ENCODE measurements at regions of chr1 and their contacts with region 1.

Region 1: DNA sequence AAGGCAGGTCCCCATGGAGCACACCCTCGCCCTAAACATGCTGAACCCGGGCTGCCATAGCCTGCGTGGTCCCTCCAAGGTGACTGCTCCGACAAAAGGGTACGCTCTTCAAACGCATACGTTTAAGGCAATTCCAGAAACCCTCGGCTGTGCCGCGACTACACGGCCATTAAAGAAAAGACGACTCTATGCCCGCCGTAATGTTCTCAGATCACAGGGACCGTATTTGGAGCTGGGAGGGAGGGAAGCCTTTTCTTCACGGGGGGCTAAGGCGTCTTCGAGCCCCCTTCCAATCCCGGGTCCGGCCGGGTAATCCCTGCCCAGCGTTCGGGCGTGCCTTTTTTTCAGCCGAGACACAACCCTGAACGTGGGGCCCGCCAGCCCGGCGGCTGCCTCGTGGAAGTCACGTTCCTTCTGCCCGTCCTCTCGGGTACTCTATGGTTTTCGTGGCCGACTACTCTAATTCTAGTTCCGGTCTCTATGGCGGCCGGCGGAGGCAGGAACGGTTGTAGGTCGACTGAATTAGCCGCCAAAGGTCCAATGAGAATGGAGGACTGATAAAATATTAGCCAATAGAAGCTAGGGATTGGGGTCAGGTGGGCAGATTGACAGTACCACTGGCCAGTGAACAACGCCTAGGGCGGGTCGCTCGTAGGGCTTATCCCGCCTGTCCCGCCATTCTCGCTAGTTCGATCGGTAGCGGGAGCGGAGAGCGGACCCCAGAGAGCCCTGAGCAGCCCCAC is at the start of gene YBX1:
- DNase-seq: peak; percentile 98
- total RNA-seq, gene YBX1: 717 TPM

Region 2: GRCh38 chr1:42456010-42456758 is 225.7 kb before region 1 on chr1 and contains the starts of genes PPCS and ZMYND12:
- intact Hi-C with region 1: loop called (anchors 1 kb)
- DNase-seq: peak; percentile 91
- total RNA-seq, gene PPCS: 44.3 TPM
- total RNA-seq, gene ZMYND12: 1.6 TPM

Region 3: GRCh38 chr1:42657971-42658879 is 23.7 kb before region 1 on chr1 and contains the start of gene PPIH:
- intact Hi-C with region 1: loop called (anchors 1 kb)
- DNase-seq: peak; percentile 98
- total RNA-seq, gene PPIH: 18.3 TPM

Region 4: GRCh38 chr1:42766741-42767509 is 85.0 kb after region 1 on chr1 and contains the starts of genes C1orf50 and P3H1:
- intact Hi-C with region 1: loop called (anchors 5 kb)
- DNase-seq: peak; percentile 100
- total RNA-seq, gene C1orf50: 11.0 TPM
- total RNA-seq, gene P3H1: 12.2 TPM